Activated naive CD4-positive, alpha-beta T cell treated with anti-CD3 and anti-CD28 coated beads for 36 hours (primary cell): ENCODE measurements at regions of chr11 and their contacts with region 1.

Region 1: GRCh38 chr11:134261626-134262488 is 8.5 kb downstream of the ACAD8 start:
- DNase-seq: peak; percentile 52
- H3K4me3 Mint-ChIP-seq: no peak overlapping the region
- H3K27ac Mint-ChIP-seq: no peak overlapping the region
- H3K4me1 Mint-ChIP-seq: no peaks in the 10 kb centered on the region
- H3K27me3 Mint-ChIP-seq: no peaks in the 10 kb centered on the region

Region 2: DNA sequence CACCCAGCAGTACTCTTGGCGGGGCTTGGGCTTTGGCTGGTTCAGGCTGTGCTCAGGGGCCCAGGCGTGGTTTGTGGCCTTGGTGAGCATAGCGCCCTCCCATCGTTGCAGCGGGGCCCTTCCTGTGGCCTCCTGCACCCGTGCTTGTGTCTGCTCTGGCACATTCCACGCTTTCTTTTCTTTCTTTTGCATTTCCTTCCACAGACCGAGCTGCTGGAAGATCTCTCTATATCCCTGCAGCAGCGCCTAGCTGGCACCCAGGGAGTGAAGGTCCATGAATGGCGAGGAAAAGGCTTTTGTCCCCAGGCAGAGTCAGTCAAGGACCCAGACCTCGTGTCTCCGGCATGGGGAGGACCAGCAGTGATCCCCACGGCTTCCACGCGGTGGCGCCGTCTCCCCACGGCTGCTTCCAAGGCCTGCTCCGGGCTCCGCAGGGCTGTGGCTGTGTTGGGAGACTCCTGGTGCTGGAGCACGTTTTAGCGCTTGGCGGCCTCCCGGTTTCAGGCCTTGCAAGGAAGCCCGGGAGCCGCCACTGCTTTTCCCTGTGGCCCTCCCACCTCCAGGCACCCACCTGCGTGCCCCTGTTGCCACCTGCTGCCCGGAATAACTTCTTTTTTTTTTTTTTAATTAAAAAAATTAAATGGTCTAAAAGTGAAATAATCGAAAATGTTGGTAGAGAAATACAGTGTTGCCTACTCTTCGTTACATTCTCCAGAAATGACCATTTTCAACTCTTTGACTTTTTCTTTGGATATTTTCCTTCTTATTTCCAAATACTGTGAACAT is 98.4 kb after region 1 on chr11:
- CTCF ChIA-PET with region 1: no interaction called
- intact Hi-C with region 1: loop called (anchors 1 kb)
- DNase-seq: peak; percentile 84
- H3K4me3 Mint-ChIP-seq: no peak overlapping the region
- H3K27ac Mint-ChIP-seq: no peak overlapping the region
- H3K4me1 Mint-ChIP-seq: peaks cover 14% of the 10 kb centered on the region
- H3K27me3 Mint-ChIP-seq: peaks cover 5% of the 10 kb centered on the region

Region 3: GRCh38 chr11:134449713-134450112 is 187.9 kb after region 1 on chr11:
- CTCF ChIA-PET with region 1: no interaction called
- intact Hi-C with region 1: loop called (anchors 5 kb)
- DNase-seq: peak; percentile 17
- H3K4me3 Mint-ChIP-seq: no peak overlapping the region
- H3K27ac Mint-ChIP-seq: no peak overlapping the region
- H3K4me1 Mint-ChIP-seq: no peaks in the 10 kb centered on the region
- H3K27me3 Mint-ChIP-seq: peaks cover 6% of the 10 kb centered on the region

Region 4: GRCh38 chr11:134466156-134466555 is 204.3 kb after region 1 on chr11:
- CTCF ChIA-PET with region 1: no interaction called
- intact Hi-C with region 1: no loop called
- DNase-seq: no peak
- H3K4me3 Mint-ChIP-seq: no peak overlapping the region
- H3K27ac Mint-ChIP-seq: no peak overlapping the region
- H3K4me1 Mint-ChIP-seq: no peaks in the 10 kb centered on the region
- H3K27me3 Mint-ChIP-seq: peaks cover 24% of the 10 kb centered on the region